ENCODE measurements at regions of chr10 and their contacts with region 1.

Region 1: DNA sequence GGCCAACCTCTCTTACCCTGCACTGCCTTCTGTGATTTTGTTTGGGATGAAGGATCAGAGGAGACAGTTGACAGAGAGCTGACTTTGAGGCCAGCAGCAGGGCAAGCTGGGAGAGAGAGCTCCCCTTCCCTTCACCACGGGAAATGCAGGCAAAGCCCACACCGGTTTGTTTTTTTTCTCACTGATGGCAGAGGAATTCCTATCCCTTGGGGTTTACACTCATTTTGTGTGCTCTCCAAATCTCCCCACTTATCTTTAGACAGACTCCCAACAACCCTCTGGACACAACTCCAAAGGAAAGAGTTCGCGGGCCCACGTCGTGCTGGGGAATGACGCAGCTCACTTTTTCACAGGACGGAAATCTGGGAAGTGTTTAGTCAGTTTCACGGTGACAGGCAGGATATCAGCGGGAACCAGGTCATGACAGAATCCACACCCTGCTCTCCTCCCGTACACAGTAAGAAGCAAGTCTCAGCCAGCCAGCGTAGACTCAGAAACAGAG is 68.3 kb upstream of the FAM171A1 start:
- DNase-seq: no peak
- ATAC-seq: peak; percentile 51 to 62
- H3K4me3 ChIP-seq: peak overlapping the region; percentile 27 to 44 (median 36)
- H3K27ac ChIP-seq: peak overlapping the region in 2 of 4 donors; percentile 33 to 48
- H3K4me1 ChIP-seq: peaks cover 0 to 4% of the 10 kb centered on the region in 2 donors
- H3K27me3 ChIP-seq: no peaks in the 10 kb centered on the region
- CTCF ChIP-seq: peak in 1 of 5 experiments; percentile 12
- POLR2A ChIP-seq: no peak

Region 2: DNA sequence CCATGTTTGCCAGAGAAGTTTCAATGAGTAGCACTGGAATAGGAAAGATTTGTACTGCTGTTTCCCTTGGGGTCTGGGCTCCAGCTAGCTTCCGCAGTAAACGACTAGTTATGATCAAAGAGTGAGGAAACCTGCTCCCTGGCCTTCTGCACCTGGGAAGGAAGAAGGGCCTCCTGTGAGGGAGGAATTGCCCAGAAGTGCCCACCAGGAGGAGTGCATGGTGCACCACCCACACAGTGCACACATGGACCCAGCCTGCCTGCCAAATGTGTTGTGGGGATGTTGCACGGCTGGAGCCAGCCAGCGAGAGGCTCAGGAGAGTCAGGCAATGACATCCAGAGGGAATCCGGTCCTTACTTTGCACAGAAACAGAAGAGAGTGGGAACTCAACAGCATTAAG is 637.7 kb before region 1 on chr10:
- in situ Hi-C with region 1: no loop called
- intact Hi-C with region 1: no loop called
- DNase-seq: no peak
- ATAC-seq: no peak
- H3K4me3 ChIP-seq: no peak overlapping the region
- H3K27ac ChIP-seq: no peak overlapping the region
- H3K4me1 ChIP-seq: no peaks in the 10 kb centered on the region
- H3K27me3 ChIP-seq: no peaks in the 10 kb centered on the region
- CTCF ChIP-seq: no peak
- POLR2A ChIP-seq: no peak

Region 3: DNA sequence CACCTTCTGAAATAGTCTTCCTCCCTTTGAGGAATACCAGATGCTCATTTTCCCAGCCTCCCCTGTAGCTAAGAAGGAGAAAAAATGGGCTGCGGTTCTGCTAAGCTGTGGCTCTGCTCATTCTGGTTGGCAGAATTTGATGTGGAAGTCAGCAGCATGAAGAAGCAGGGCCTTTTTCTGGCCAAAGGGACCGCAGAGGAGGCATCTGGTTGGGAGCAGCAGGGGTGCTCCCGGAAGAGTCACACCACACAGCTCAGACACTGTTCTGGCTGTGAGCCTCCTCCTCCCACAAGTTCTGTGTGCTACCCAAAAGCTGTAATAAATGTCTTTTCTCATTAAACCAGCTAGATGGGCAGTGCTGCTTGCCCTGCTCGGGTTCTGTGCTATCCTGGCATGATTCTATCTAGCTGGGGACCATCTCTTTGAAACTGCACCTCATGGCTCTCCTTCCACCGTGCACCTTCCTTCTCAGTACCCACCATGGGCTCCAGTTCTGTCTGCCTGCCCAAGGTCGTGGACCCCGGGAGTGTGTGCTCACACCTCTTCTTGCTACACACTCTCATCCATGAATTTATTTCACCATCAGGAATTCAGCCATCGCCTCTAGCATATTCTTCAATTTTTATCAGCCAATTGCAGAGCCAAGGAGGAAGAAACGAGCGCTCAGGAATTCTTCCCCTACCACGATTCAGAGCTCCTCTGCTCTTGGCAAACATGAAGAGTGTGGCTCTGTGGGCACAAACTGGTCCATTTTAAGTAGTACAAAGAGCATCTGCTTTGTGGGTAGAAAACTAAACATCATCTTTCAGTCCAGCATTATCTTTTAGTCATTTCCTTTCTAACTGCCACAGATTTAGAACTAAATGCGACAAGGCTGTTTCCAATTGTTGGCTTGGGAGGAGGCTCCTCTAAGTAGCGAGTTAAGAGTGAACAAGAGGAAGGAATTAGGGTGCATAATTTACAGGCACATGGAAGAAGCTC is 145.2 kb before region 1 on chr10:
- in situ Hi-C with region 1: no loop called
- intact Hi-C with region 1: no loop called
- DNase-seq: no peak
- ATAC-seq: no peak
- H3K4me3 ChIP-seq: no peak overlapping the region
- H3K27ac ChIP-seq: no peak overlapping the region
- H3K4me1 ChIP-seq: no peaks in the 10 kb centered on the region
- H3K27me3 ChIP-seq: no peaks in the 10 kb centered on the region
- CTCF ChIP-seq: no peak
- POLR2A ChIP-seq: no peak

Region 4: DNA sequence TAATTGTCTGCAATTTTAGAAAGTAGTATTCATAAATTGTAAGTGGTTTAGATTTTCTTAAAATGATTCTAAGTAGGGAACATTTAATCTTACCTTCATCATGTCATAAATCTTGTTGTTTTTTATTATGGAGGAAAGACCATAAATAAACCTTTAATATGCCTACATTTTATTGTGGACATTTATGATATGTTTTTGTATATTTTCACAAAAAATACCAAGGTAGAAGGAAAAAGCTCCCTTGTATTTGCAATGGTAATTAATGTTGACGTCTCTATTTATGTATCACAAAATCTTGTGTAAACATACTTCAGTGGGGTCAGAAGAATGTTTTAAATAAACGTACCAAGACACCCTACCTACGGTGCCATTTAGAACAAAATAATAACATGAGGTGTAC is 87.4 kb after region 1 on chr10:
- in situ Hi-C with region 1: no loop called
- intact Hi-C with region 1: no loop called
- DNase-seq: no peak
- ATAC-seq: no peak
- H3K4me3 ChIP-seq: no peak overlapping the region
- H3K27ac ChIP-seq: no peak overlapping the region
- H3K4me1 ChIP-seq: no peaks in the 10 kb centered on the region
- H3K27me3 ChIP-seq: no peaks in the 10 kb centered on the region
- CTCF ChIP-seq: no peak
- POLR2A ChIP-seq: no peak

Region 5: GRCh38 chr10:15719899-15720634 is 280.7 kb after region 1 on chr10 and contains the start of gene ITGA8:
- in situ Hi-C with region 1: loop called (anchors 5 to 25 kb)
- intact Hi-C with region 1: loop called (anchors 10 kb)
- DNase-seq: no peak
- ATAC-seq: peak; percentile 41 to 49
- H3K4me3 ChIP-seq: peak within 1 kb of the TSS; percentile 39 to 53 (median 50)
- H3K27ac ChIP-seq: peak within 1 kb of the TSS in 2 of 4 donors; percentile 34 to 67
- H3K4me1 ChIP-seq: no peaks in the 10 kb centered on the region
- H3K27me3 ChIP-seq: peaks cover 10 to 31% (median 11%) of the 10 kb centered on the region in 3 donors
- CTCF ChIP-seq: peak in 2 of 5 experiments; percentile 10 to 29
- POLR2A ChIP-seq: no peak
- total RNA-seq, gene ITGA8: 1.6 to 17.4 (median 10.3) TPM

Measured in gastrocnemius medialis (tissue), 4 donors.